ENCODE measurements at regions of chr21 and their contacts with region 1.

Region 1: GRCh38 chr21:14737922-14738321 is 191.8 kb upstream of the SAMSN1 start:
- DNase-seq: peak; percentile 41
- H3K4me3 Mint-ChIP-seq: no peak overlapping the region
- H3K27ac Mint-ChIP-seq: peak overlapping the region; percentile 9
- H3K4me1 Mint-ChIP-seq: peaks cover 40% of the 10 kb centered on the region
- H3K27me3 Mint-ChIP-seq: no peaks in the 10 kb centered on the region

Region 2: DNA sequence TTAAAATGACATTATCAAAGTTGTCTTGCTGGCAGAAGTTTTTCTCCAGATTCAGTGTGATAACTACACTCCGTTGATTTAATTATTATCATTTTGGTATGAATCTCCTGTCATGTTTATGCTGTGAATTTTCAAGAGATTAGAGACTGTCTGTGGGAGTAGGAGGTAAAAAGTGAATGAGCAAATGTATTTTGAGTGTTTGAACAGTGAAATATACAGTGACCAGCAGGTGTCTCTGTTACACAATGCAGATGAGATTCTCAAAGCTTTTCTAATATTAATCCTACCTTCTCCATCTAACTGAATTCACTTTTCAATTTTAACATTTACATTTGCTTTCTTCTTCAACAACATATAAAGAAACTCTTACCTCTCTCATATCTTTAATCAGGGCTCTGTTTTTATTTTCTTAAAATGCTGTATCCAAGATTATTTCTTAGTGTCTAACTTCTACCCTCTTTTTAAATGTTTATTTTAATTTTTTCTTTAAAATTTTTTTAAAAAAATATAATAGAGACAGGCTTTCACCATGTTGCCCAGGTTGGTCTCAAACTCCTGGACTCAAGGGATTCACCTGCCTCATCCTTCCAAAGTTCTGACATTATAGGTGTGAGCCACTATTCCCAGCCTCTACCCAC is 334.1 kb before region 1 on chr21:
- intact Hi-C with region 1: loop called (anchors 2 kb)
- DNase-seq: no peak
- H3K4me3 Mint-ChIP-seq: no peak overlapping the region
- H3K27ac Mint-ChIP-seq: no peak overlapping the region
- H3K4me1 Mint-ChIP-seq: peaks cover 5% of the 10 kb centered on the region
- H3K27me3 Mint-ChIP-seq: no peaks in the 10 kb centered on the region

Region 3: GRCh38 chr21:14533504-14534428 is 204.2 kb before region 1 on chr21:
- intact Hi-C with region 1: loop called (anchors 1 kb)
- DNase-seq: peak; percentile 22
- H3K4me3 Mint-ChIP-seq: peak overlapping the region; percentile 86
- H3K27ac Mint-ChIP-seq: peak overlapping the region; percentile 99
- H3K4me1 Mint-ChIP-seq: peaks cover 79% of the 10 kb centered on the region
- H3K27me3 Mint-ChIP-seq: no peaks in the 10 kb centered on the region

Region 4: GRCh38 chr21:14572204-14572780 is 165.6 kb before region 1 on chr21:
- intact Hi-C with region 1: loop called (anchors 5 kb)
- DNase-seq: no peak
- H3K4me3 Mint-ChIP-seq: peak overlapping the region; percentile 67
- H3K27ac Mint-ChIP-seq: peak overlapping the region; percentile 89
- H3K4me1 Mint-ChIP-seq: peaks cover 60% of the 10 kb centered on the region
- H3K27me3 Mint-ChIP-seq: no peaks in the 10 kb centered on the region

Region 5: GRCh38 chr21:14591882-14592281 is 146.0 kb before region 1 on chr21:
- intact Hi-C with region 1: loop called (anchors 1 kb)
- DNase-seq: no peak
- H3K4me3 Mint-ChIP-seq: no peak overlapping the region
- H3K27ac Mint-ChIP-seq: peak overlapping the region; percentile 83
- H3K4me1 Mint-ChIP-seq: peaks cover 54% of the 10 kb centered on the region
- H3K27me3 Mint-ChIP-seq: no peaks in the 10 kb centered on the region

Region 6: DNA sequence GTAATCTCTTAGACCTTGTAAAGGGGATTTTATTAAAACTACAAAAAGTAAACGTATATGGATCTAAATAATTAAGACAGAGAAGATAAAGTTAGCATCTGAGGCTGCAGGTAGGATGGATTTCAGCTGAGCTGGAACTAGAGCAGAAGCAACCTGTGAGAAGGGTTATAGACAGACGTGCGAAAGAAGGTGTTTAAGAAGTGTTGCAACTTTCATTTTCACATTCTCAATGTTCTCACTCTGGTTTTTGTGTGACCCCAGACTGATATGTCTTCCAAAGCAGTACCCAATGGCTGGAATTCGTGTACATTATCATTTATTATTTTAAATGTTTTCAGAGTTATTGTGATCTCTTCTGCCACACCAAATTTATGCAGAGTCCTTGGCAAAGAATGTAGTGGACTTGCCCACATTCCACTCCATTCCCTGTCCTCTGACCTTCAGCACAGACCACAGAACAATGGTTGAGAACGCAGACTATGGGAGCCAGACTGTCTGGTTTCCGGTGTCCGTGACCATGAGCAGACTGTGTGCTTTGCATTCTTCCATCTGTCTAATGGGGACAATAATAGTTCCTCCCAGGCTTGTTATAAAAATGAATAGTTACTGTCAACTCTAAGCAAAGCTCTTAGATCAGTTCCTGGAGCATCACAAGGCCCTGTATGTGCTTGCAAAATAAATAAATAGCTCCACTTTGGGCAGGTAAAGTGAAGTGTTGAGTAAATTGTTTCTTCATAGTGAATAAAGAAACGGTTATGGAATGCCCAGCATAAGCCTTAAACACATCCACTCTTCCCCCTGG is 51.3 kb before region 1 on chr21:
- intact Hi-C with region 1: loop called (anchors 2 kb)
- DNase-seq: no peak
- H3K4me3 Mint-ChIP-seq: peak overlapping the region; percentile 34
- H3K27ac Mint-ChIP-seq: no peak overlapping the region
- H3K4me1 Mint-ChIP-seq: peaks cover 58% of the 10 kb centered on the region
- H3K27me3 Mint-ChIP-seq: no peaks in the 10 kb centered on the region

Region 7: GRCh38 chr21:14712121-14712723 is 25.7 kb before region 1 on chr21:
- intact Hi-C with region 1: no loop called
- DNase-seq: no peak
- H3K4me3 Mint-ChIP-seq: no peak overlapping the region
- H3K27ac Mint-ChIP-seq: no peak overlapping the region
- H3K4me1 Mint-ChIP-seq: peaks cover 7% of the 10 kb centered on the region
- H3K27me3 Mint-ChIP-seq: no peaks in the 10 kb centered on the region

Region 8: GRCh38 chr21:14773777-14774345 is 35.9 kb after region 1 on chr21:
- intact Hi-C with region 1: loop called (anchors 1 kb)
- DNase-seq: peak; percentile 45
- H3K4me3 Mint-ChIP-seq: no peak overlapping the region
- H3K27ac Mint-ChIP-seq: no peak overlapping the region
- H3K4me1 Mint-ChIP-seq: no peaks in the 10 kb centered on the region
- H3K27me3 Mint-ChIP-seq: peaks cover 2% of the 10 kb centered on the region

Region 9: GRCh38 chr21:15121097-15121654 is 383.3 kb after region 1 on chr21:
- intact Hi-C with region 1: no loop called
- DNase-seq: no peak
- H3K4me3 Mint-ChIP-seq: no peak overlapping the region
- H3K27ac Mint-ChIP-seq: no peak overlapping the region
- H3K4me1 Mint-ChIP-seq: no peaks in the 10 kb centered on the region
- H3K27me3 Mint-ChIP-seq: peaks cover 3% of the 10 kb centered on the region

Measured in activated T-helper 1 cell treated with anti-CD3 and anti-CD28 coated beads, Interleukin-12 subunit alpha, Interleukin-12 subunit beta, Interleukin-2, Interleukin-4 antibody, amounts not matched to agents 30 ng/mL and 10 ng/mL and 1 ng/mL, durations not matched to agents 14 hours and 24 hours and 36 hours (primary cell).